PC-9 (cell line): ENCODE measurements at regions of chr14 and their contacts with region 1.

Region 1: GRCh38 chr14:80055667-80056496 is 155.4 kb downstream of the DIO2 start:
- DNase-seq: peak; percentile 47 to 55
- H3K4me3 ChIP-seq: no peak overlapping the region
- H3K27ac ChIP-seq: no peak overlapping the region
- H3K4me1 ChIP-seq: no peaks in the 10 kb centered on the region
- H3K27me3 ChIP-seq: no peaks in the 10 kb centered on the region
- CTCF ChIP-seq: peak; percentile 82

Region 2: GRCh38 chr14:80037349-80037748 is 18.5 kb before region 1 on chr14:
- CTCF ChIA-PET with region 1: no interaction called
- POLR2A ChIA-PET with region 1: no interaction called
- intact Hi-C with region 1: no loop called
- DNase-seq: no peak
- H3K4me3 ChIP-seq: no peak overlapping the region
- H3K27ac ChIP-seq: no peak overlapping the region
- H3K4me1 ChIP-seq: no peaks in the 10 kb centered on the region
- H3K27me3 ChIP-seq: no peaks in the 10 kb centered on the region
- CTCF ChIP-seq: no peak

Region 3: GRCh38 chr14:80425686-80426085 is 369.8 kb after region 1 on chr14:
- CTCF ChIA-PET with region 1: no interaction called
- POLR2A ChIA-PET with region 1: no interaction called
- intact Hi-C with region 1: loop called (anchors 5 kb)
- DNase-seq: peak; percentile 54 to 99
- H3K4me3 ChIP-seq: no peak overlapping the region
- H3K27ac ChIP-seq: peak overlapping the region; percentile 92
- H3K4me1 ChIP-seq: peaks cover 29% of the 10 kb centered on the region
- H3K27me3 ChIP-seq: no peaks in the 10 kb centered on the region
- CTCF ChIP-seq: no peak

Region 4: DNA sequence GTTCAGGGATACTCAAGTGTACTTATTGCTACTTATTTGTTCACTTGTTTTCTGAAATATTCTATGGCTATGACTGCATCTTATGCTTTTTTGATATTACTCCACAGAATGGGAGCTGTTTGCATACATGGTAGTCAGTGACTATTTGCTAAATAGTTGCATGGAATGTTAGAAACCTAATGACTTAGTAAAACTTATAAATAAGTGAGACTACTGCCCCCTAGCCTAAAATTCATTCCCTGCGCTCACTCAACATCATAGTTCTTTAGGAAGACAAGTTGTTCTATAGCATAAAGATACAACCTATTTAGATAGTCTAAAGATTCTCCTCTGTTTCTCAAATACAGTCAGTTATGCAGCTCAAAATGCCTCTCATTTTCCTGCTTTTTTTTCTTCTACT is 580.2 kb after region 1 on chr14:
- CTCF ChIA-PET with region 1: no interaction called
- POLR2A ChIA-PET with region 1: no interaction called
- intact Hi-C with region 1: loop called (anchors 5 kb)
- DNase-seq: no peak
- H3K4me3 ChIP-seq: no peak overlapping the region
- H3K27ac ChIP-seq: peak overlapping the region; percentile 99
- H3K4me1 ChIP-seq: peaks cover 45% of the 10 kb centered on the region
- H3K27me3 ChIP-seq: no peaks in the 10 kb centered on the region
- CTCF ChIP-seq: 0 out of 2 replicates have a peak, but pooled peaks have one; percentile 21

Region 5: GRCh38 chr14:80850197-80850814 is 794.4 kb after region 1 on chr14:
- CTCF ChIA-PET with region 1: interaction called, 3 read pairs
- POLR2A ChIA-PET with region 1: no interaction called
- intact Hi-C with region 1: loop called (anchors 1 kb)
- DNase-seq: no peak
- H3K4me3 ChIP-seq: no peak overlapping the region
- H3K27ac ChIP-seq: no peak overlapping the region
- H3K4me1 ChIP-seq: peaks cover 7% of the 10 kb centered on the region; the same call in 1 of the 2 replicates
- H3K27me3 ChIP-seq: no peaks in the 10 kb centered on the region
- CTCF ChIP-seq: peak; percentile 94

Region 6: GRCh38 chr14:80987235-80988032 is 931.6 kb after region 1 on chr14:
- CTCF ChIA-PET with region 1: interaction called, 4 read pairs
- POLR2A ChIA-PET with region 1: no interaction called
- intact Hi-C with region 1: loop called (anchors 2 kb)
- DNase-seq: peak; percentile 69 to 72
- H3K4me3 ChIP-seq: peak overlapping the region; percentile 4; the same call in 1 of the 2 replicates
- H3K27ac ChIP-seq: no peak overlapping the region
- H3K4me1 ChIP-seq: peaks cover 7% of the 10 kb centered on the region; the same call in 1 of the 2 replicates
- H3K27me3 ChIP-seq: peaks cover 10% of the 10 kb centered on the region; the same call in 1 of the 2 replicates
- CTCF ChIP-seq: peak; percentile 98

Region 7: DNA sequence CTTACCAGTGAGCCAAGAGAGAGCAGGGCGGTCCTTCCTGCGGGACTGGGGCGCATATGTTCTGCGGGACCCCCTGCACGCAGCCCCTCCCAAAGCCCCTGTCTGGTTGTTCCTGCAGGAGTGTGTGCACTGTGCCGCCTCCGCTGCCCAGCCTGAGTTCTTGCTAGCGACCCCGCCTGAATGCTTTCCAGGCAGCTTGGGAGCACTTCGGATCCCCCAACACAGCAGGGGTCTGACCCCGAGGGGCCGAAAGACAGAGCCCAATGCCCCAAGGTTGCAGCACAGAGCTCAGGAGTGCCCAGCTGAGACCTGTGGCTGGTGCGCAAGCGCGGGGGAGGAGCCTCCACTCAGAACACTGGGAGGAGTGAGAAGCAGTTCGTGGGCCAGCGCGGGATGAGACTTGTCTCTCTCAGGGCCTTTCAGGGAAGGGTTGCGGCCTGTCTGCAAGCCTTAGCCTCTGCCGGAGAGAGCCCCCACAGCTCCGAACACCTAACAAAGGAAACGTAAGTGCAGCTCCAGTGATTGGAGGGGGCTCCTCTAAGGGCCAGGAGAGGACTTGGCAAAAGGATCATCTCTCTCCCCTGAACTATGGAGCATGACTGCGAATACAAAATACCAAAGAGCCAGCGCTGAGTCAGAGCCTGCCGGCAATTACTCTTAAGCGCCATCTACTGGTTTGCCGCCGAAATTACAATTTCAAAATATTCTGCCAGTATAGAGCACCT is 1114.4 kb after region 1 on chr14:
- CTCF ChIA-PET with region 1: no interaction called
- POLR2A ChIA-PET with region 1: interaction called, 15 read pairs
- intact Hi-C with region 1: loop called (anchors 10 kb)
- DNase-seq: peak; percentile 68 to 84
- H3K4me3 ChIP-seq: peak overlapping the region; percentile 54
- H3K27ac ChIP-seq: 0 out of 2 replicates have a peak overlapping the region, but pooled peaks have one; percentile 16
- H3K4me1 ChIP-seq: no peaks in the 10 kb centered on the region
- H3K27me3 ChIP-seq: no peaks in the 10 kb centered on the region
- CTCF ChIP-seq: peak; percentile 93